Heart right ventricle (tissue), 16 donors: ENCODE measurements at regions of chr1 and their contacts with region 1.

Region 1: GRCh38 chr1:202329891-202330290 is 11.8 kb downstream of the UBE2T start:
- DNase-seq: no peak
- ATAC-seq: peak in 3 of 8 donors; percentile 26 to 54 (median 52)
- H3K4me3 ChIP-seq: no peak overlapping the region
- H3K27ac ChIP-seq: no peak overlapping the region
- H3K4me1 ChIP-seq: peaks cover 0 to 10% (median 0%) of the 10 kb centered on the region in 9 donors
- H3K27me3 ChIP-seq: no peaks in the 10 kb centered on the region
- CTCF ChIP-seq: peak in 2 of 9 donors; percentile 6 to 17

Region 2: DNA sequence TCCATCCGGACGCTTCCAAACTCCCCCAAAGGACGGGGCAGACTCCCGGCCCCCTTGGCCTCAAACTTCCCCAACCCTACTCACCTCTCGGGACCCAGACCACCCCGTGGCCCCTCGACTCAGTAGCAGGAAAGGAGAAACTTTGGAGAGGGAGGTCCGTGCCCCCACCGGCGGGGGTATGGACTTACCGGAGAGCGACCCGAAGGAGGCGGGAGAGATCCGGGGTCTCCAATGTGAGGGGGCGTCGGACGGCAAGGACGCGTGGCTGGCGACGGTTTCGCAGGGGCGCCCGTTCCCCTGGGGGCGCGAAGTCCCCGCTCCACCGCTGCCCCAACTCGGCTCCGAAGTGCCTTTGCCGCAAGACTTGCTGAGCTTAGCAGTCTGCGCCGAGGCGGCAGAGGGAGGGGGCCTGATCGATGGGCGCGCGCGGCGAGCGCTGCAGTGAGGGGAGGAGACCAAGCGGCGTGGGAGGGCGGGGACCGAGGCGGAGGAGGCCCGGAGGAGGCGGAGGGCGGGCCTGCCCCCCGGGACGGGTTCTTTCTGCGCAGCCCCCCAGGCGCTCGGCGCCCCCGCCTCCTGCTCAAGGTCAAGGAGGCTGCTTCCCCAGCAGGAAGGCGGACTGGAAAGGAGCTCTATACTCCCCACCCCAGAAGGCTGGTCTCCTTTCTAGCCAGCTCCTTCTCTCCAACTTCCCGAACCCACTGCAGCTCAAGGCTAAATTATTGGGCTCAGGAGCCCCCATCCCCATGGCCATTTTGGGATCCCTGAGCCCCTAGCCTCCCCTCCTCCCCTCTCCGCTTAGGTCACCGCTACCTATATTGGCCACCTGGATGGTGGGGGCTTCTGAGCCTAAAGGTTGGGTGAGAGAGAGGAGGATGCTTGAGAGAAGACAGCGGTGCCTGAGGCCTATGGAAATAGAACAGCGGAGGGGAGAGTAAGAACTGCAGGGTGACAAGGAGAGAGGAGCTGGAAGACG is 380.5 kb after region 1 on chr1 and contains the start of gene SYT2:
- intact Hi-C with region 1: loop called in 1 of 10 experiments (anchors 10 kb)
- DNase-seq: no peak
- ATAC-seq: peak in 6 of 8 donors; percentile 30 to 65 (median 50)
- H3K4me3 ChIP-seq: peak within 1 kb of the TSS; percentile 11 to 45 (median 34)
- H3K27ac ChIP-seq: no peak within 1 kb of the TSS
- H3K4me1 ChIP-seq: peaks cover 0 to 19% (median 15%) of the 10 kb centered on the region in 9 donors
- H3K27me3 ChIP-seq: peaks cover 7 to 98% (median 65%) of the 10 kb centered on the region in 7 donors
- CTCF ChIP-seq: no peak
- total RNA-seq, gene SYT2: 0.02 TPM in 1 of 10 donors, not detected in the others

Region 3: DNA sequence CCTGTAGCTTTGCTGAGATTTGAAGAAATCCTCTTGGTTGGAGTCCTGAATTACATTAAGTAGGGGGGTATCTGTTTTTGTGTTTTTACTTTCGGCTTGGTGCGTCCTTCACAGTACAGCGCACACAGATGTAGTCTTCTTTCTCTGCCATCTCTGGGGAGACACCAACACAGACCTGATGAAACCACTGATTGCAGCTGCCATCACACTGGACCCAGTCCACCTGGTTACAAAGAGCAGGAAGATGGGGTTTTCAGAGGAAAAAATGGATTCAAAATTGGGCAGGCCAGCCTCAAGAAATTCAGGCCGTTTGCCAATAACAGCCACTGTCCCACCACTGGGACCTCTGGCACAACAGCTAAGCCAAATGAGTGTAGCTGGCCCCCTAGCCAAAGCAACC is 399.1 kb after region 1 on chr1:
- intact Hi-C with region 1: loop called in 1 of 10 experiments (anchors 5 kb)
- DNase-seq: no peak
- ATAC-seq: no peak
- H3K4me3 ChIP-seq: no peak overlapping the region
- H3K27ac ChIP-seq: no peak overlapping the region
- H3K4me1 ChIP-seq: no peaks in the 10 kb centered on the region
- H3K27me3 ChIP-seq: no peaks in the 10 kb centered on the region
- CTCF ChIP-seq: no peak